Naive thymus-derived CD8-positive, alpha-beta T cell (primary cell): ENCODE measurements at regions of chr10 and their contacts with region 1.

Region 1: DNA sequence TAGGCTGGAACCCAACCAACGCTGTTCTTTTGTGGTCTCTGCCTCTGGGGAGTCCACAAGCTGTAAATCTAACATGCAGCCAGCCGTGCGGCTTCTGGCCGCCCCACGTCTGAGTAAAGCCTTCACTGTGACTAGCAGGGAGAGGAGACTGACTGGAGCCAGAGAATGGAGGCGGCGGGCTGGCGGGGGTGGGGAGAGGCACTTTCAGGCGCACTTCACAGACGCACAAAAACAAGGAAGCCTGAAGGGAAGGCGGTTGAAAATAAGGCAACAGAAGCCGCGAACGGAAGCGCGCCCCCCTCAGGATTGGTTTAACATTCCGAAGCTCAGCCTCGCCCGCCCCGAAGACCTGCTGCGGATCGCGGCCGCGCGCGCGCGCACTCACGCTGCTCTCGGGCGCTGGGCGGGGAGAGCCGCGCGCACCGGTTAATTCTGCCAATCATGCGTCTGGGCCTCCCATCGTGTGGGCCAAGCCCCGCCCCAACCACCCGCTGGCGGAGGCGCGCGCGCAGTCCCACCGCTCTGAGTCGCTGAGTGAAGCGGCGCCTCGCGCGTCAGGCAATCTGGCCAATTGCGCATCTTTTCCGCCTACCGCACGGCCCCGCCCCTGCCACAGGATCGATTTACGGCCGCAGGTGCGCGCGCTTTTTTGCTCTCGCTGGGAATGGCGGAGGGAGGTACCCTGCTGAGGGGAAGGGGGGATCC is at the start of gene SFR1:
- DNase-seq: peak; percentile 94 to 100 (median 99)
- ATAC-seq: peak; percentile 82 to 84
- H3K4me3 Mint-ChIP-seq: peak within 1 kb of the TSS; percentile 91 to 99 (median 94)
- H3K27ac Mint-ChIP-seq: peak within 1 kb of the TSS; percentile 96 to 100 (median 99)
- H3K4me1 Mint-ChIP-seq: peaks cover 9 to 28% (median 23%) of the 10 kb centered on the region in 4 donors
- H3K27me3 Mint-ChIP-seq: no peaks in the 10 kb centered on the region
- polyA plus RNA-seq, gene SFR1: 12.9 to 18.2 (median 14.4) TPM

Region 2: GRCh38 chr10:103584216-103585010 is 537.3 kb before region 1 on chr10:
- POLR2A ChIA-PET with region 1: interaction called, 18 read pairs
- DNase-seq: peak; percentile 50 to 87 (median 62)
- ATAC-seq: peak; percentile 74 to 78
- H3K4me3 Mint-ChIP-seq: peak overlapping the region; percentile 85 to 98 (median 92)
- H3K27ac Mint-ChIP-seq: peak overlapping the region; percentile 83 to 98 (median 96)
- H3K4me1 Mint-ChIP-seq: peaks cover 2 to 23% (median 10%) of the 10 kb centered on the region in 4 donors
- H3K27me3 Mint-ChIP-seq: peaks cover 0 to 2% (median 0%) of the 10 kb centered on the region in 5 donors

Region 3: DNA sequence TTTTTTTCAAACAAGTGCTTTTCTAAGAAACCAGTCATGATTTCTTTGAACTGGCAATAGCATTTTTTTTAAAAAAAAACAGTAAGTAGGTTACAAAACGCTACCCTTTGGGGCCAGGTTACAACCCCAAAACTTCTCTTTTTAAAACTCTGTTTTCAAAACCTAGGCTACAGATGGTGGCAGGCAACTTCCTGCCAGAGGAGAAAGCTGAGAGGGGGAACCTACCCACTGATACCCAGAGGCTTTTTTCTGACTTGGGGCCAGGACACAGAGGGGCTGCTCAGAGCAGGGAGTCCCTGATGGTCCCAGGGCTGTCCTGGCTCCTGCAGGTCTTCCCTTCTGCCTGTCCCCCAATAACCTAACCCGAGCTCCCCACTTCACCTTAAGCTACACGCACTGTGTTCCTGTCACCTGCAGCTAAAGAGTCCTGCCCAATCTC is 210.6 kb before region 1 on chr10:
- POLR2A ChIA-PET with region 1: interaction called, 18 read pairs
- DNase-seq: peak; percentile 14 to 88 (median 68)
- ATAC-seq: peak; percentile 80 to 88
- H3K4me3 Mint-ChIP-seq: peak overlapping the region; percentile 69 to 89 (median 80)
- H3K27ac Mint-ChIP-seq: peak overlapping the region; percentile 92 to 99 (median 98)
- H3K4me1 Mint-ChIP-seq: peaks cover 39 to 88% (median 80%) of the 10 kb centered on the region in 4 donors
- H3K27me3 Mint-ChIP-seq: no peaks in the 10 kb centered on the region

Region 4: GRCh38 chr10:103966671-103967447 is 154.8 kb before region 1 on chr10 and contains the start of gene SLK:
- POLR2A ChIA-PET with region 1: interaction called, 10 read pairs
- DNase-seq: peak; percentile 77 to 92 (median 86)
- ATAC-seq: peak; percentile 80 to 82
- H3K4me3 Mint-ChIP-seq: peak within 1 kb of the TSS; percentile 84 to 100 (median 98)
- H3K27ac Mint-ChIP-seq: peak within 1 kb of the TSS; percentile 94 to 98 (median 96)
- H3K4me1 Mint-ChIP-seq: peaks cover 13 to 46% (median 43%) of the 10 kb centered on the region in 4 donors
- H3K27me3 Mint-ChIP-seq: no peaks in the 10 kb centered on the region
- polyA plus RNA-seq, gene SLK: 5.0 to 12.7 (median 7.0) TPM

Region 5: GRCh38 chr10:104146882-104147281 is 25.2 kb after region 1 on chr10:
- POLR2A ChIA-PET with region 1: no interaction called
- DNase-seq: no peak
- ATAC-seq: no peak
- H3K4me3 Mint-ChIP-seq: no peak overlapping the region
- H3K27ac Mint-ChIP-seq: no peak overlapping the region
- H3K4me1 Mint-ChIP-seq: no peaks in the 10 kb centered on the region
- H3K27me3 Mint-ChIP-seq: peaks cover 9 to 22% (median 11%) of the 10 kb centered on the region in 5 donors

Region 6: GRCh38 chr10:104268716-104269645 is 147.3 kb after region 1 on chr10 and contains the start of gene GSTO2:
- POLR2A ChIA-PET with region 1: interaction called, 11 read pairs
- DNase-seq: peak; percentile 93 to 99 (median 98)
- ATAC-seq: peak; percentile 89 to 94
- H3K4me3 Mint-ChIP-seq: peak within 1 kb of the TSS; percentile 89 to 96 (median 94)
- H3K27ac Mint-ChIP-seq: peak within 1 kb of the TSS; percentile 94 to 99 (median 98)
- H3K4me1 Mint-ChIP-seq: peaks cover 13 to 51% (median 47%) of the 10 kb centered on the region in 4 donors
- H3K27me3 Mint-ChIP-seq: no peaks in the 10 kb centered on the region
- polyA plus RNA-seq, gene GSTO2: 0.15 to 2.0 (median 1.1) TPM